Panc1 (cell line): ENCODE measurements at regions of chr3 and their contacts with region 1.

Region 1: DNA sequence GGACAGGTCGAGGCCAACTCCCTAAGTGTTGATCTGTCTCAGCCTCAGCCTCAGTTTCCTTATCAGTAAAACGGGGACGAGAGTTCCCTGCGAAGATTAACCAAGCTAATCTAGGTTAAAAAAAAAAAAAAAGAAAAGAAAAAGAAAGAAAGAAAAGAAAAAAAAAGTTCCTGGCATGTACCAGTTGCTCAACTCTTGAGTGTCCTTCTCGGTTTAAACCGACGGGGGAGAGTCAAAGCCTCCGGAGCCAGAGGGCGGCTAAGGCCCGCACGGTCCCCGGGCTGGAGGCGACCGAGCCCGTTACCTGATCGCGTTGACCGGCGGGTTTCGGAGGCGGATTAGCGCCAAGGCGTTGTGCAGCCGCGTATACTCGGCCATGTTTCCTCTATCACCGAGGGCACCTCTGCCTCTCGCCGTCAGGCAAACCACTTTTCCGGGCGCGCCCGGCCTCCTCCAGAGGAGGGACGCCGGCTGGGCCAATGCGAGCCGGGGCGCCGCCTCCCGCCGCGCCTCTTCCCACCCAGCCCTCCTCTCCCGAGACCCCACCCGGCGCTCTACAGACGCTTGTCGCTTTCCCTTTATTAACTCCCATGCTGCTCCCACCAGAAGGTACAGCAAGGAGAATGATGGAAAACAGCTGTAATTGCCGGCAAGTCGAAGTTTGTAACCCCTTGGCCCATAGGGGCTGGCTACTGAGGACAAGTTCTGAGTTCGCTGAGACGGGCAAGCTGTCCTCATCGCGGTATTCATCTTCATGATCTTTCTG is at the start of gene EHHADH:
- DNase-seq: no peak
- ATAC-seq: peak; percentile 100
- H3K4me3 ChIP-seq: peak within 1 kb of the TSS; percentile 63 to 78
- H3K27ac ChIP-seq: peak within 1 kb of the TSS; percentile 78
- H3K4me1 ChIP-seq: peaks cover 4% of the 10 kb centered on the region; the same call in 1 of the 2 replicates
- H3K27me3 ChIP-seq: no peaks in the 10 kb centered on the region
- CTCF ChIP-seq: no peak
- total RNA-seq, gene EHHADH: 7.8 TPM

Region 2: DNA sequence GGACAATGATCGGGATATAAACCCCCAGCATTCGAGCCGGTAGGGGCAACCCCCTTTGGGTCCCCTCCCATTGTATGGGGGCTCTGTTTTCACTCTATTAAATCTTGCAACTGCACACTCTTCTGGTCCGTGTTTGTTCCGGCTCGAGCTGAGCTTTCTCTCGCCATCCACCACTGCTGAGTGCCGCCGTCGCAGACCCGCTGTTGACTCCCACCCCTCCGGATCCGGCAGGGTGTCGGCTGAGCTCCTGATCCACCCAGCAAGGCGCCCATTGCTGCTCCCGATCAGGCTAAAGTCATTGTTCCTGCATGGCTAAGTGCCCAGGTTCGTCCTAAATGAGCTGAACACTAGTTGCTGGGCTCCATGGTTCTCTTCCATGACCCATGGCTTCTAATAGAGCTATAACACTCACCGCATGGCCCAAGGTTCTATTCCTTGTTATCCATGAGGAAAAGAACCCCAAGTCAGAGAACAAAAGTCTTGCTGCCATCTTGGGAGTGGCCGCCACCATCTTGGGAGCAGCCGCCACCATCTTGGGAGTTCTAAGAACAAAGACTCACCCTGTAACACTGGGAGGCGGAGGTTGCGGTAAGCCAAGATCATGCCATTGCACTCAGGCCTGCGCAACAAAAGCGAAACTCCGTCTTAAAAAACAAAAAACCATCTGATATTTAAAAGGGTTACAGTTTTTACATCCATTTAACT is 11.2 kb after region 1 on chr3:
- CTCF ChIA-PET with region 1: interaction called, 13 read pairs
- POLR2A ChIA-PET with region 1: interaction called, 12 read pairs
- in situ Hi-C with region 1: no loop called
- intact Hi-C with region 1: no loop called
- DNase-seq: no peak
- ATAC-seq: no peak
- H3K4me3 ChIP-seq: no peak overlapping the region
- H3K27ac ChIP-seq: no peak overlapping the region
- H3K4me1 ChIP-seq: no peaks in the 10 kb centered on the region; the same call in 1 of the 2 replicates
- H3K27me3 ChIP-seq: no peaks in the 10 kb centered on the region
- CTCF ChIP-seq: no peak

Region 3: DNA sequence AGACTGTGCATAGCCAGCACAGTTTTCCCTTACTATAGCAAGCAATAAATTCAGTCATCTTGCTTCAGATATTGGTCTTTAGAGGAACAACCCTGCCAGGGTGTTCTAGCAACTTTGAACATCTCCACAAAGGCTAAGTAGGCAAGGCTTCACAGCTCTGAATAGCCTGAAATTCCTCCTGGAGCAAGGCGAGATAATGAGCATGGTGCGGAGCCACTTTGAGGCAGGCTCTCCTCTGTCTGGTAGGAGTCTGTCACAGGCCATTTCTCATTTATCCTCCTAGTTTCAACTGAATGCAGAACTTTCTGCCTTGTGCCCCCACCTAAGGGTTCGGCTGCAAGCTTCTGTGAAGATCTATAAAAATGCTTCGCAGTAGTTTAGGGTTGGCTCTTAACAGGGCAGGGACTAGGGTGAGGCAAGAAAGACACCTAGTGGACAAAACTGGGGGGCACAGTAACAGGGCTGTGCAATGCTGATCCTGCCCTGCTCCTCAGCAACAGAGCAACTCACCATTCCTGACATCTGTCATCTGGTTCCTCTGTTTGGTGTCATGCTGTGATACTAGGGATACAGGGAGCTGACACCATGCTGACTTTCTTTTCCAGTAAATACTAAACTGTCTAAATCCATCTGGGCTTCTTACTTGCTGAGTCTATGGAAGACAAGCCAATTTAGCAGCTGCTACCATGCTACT is 16.6 kb after region 1 on chr3:
- CTCF ChIA-PET with region 1: interaction called, 13 read pairs
- POLR2A ChIA-PET with region 1: no interaction called
- in situ Hi-C with region 1: no loop called
- intact Hi-C with region 1: no loop called
- DNase-seq: no peak
- ATAC-seq: peak; percentile 100
- H3K4me3 ChIP-seq: no peak overlapping the region
- H3K27ac ChIP-seq: no peak overlapping the region
- H3K4me1 ChIP-seq: peaks cover 4% of the 10 kb centered on the region; the same call in 1 of the 2 replicates
- H3K27me3 ChIP-seq: peaks cover 19% of the 10 kb centered on the region
- CTCF ChIP-seq: peak; percentile 81

Region 4: GRCh38 chr3:185297867-185298266 is 44.0 kb after region 1 on chr3:
- CTCF ChIA-PET with region 1: no interaction called
- POLR2A ChIA-PET with region 1: no interaction called
- in situ Hi-C with region 1: no loop called
- intact Hi-C with region 1: no loop called
- DNase-seq: no peak
- ATAC-seq: no peak
- H3K4me3 ChIP-seq: no peak overlapping the region
- H3K27ac ChIP-seq: no peak overlapping the region
- H3K4me1 ChIP-seq: no peaks in the 10 kb centered on the region
- H3K27me3 ChIP-seq: no peaks in the 10 kb centered on the region
- CTCF ChIP-seq: no peak